ENCODE measurements at regions of chr1 and their contacts with region 1.

Region 1: DNA sequence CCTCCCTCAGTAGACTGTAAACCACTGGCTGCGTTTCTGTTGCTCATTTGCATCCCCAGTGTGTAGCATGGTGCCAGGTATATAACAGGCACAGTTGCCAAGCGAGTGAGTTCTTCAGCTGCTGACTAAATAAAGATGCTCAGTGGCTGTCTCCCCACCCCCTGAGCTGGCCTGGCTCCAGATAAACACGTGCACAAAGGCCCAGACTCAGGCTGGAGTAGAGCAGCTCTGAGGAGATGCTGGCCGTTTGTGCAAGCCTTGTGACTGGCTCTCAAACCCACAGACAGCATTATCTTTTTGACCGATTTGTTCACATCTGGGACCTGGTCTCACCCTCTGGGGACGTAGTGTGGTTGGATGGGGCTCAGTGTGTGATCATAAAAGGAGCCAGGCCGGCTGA is 7.1 kb downstream of the CHRNB2 start:
- DNase-seq: no peak
- ATAC-seq: no peak
- H3K4me3 ChIP-seq: no peak overlapping the region
- H3K4me1 ChIP-seq: no peaks in the 10 kb centered on the region
- CTCF ChIP-seq: no peak

Region 2: DNA sequence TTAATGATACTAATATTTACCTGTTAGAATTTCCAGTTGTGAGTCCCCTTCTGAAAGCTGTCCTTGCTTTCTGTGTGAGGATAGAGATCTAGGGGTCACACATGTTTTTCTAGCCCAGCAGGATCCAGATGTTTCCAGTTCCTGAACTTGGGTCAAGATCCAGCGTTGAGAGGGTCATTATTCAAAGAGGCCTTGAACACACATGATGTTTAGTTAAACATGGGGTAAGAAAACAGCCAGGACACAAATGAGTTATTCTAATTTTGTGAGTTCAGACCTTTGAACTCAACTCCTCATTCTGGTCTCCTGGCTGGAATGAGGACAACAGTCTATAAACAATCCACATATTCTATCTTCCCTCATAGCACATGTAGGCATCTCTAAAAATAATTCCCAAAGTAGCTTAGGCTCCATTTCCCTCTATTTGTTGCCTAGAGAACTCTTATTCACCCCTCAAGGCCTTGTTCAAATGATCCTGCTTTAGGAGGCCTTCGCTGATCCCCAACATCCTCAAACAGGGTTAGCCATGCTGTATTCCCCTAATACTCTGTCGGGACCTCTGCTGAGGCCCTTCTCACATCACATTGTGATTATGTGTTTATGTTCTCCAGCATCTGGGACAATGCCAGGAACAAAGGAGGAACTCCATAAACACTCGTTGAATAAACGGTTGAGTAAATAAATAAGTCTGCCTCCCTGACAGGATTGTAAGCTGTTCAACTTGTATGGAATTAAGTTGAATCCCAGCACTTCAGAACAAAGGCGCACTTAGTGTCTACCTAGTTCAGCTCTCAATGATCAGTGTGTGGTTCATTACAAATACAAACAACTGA is 310.4 kb after region 1 on chr1:
- intact Hi-C with region 1: loop called in 1 of 2 experiments (anchors 10 kb)
- DNase-seq: no peak
- ATAC-seq: peak; percentile 16
- H3K4me3 ChIP-seq: no peak overlapping the region
- H3K4me1 ChIP-seq: peaks cover 3% of the 10 kb centered on the region
- CTCF ChIP-seq: no peak